Activated CD4-positive, alpha-beta T cell treated with anti-CD3 and anti-CD28 coated beads, Interleukin-2, amount 10 ng/mL, durations not matched to agents 7 days and 5 days (primary cell): ENCODE measurements at regions of chr7 and their contacts with region 1.

Region 1: DNA sequence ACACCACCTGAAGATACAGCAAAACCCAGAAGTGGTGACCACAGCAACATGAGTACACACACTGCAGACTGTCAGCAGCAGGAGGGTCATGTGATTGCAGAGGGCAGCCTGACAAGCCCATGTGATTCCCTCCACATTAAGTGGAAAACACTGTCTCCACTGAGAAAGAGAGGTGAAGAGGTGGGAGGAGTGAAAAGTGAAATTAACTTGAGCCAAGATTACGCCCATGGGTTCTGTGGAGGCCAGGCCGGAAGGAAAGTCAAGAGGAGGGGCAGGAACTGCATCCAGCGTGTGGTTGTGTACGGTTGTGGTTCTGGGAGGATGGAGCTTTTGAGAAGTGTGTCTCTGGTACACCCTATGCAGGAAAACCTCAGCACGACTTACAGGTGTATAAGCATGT is 138.5 kb downstream of the PLXNA4 start:
- DNase-seq: peak; percentile 85
- H3K4me3 Mint-ChIP-seq: peak overlapping the region; percentile 42
- H3K27ac Mint-ChIP-seq: peak overlapping the region; percentile 87
- H3K4me1 Mint-ChIP-seq: peaks cover 98% of the 10 kb centered on the region
- H3K27me3 Mint-ChIP-seq: peaks cover 3% of the 10 kb centered on the region

Region 2: GRCh38 chr7:132307465-132307864 is 130.3 kb before region 1 on chr7:
- CTCF ChIA-PET with region 1: no interaction called
- POLR2A ChIA-PET with region 1: no interaction called
- DNase-seq: no peak
- H3K4me3 Mint-ChIP-seq: no peak overlapping the region
- H3K27ac Mint-ChIP-seq: no peak overlapping the region
- H3K4me1 Mint-ChIP-seq: peaks cover 12% of the 10 kb centered on the region
- H3K27me3 Mint-ChIP-seq: peaks cover 33% of the 10 kb centered on the region

Region 3: GRCh38 chr7:132368246-132368900 is 69.4 kb before region 1 on chr7:
- CTCF ChIA-PET with region 1: no interaction called
- POLR2A ChIA-PET with region 1: no interaction called
- DNase-seq: no peak
- H3K4me3 Mint-ChIP-seq: no peak overlapping the region
- H3K27ac Mint-ChIP-seq: no peak overlapping the region
- H3K4me1 Mint-ChIP-seq: no peaks in the 10 kb centered on the region
- H3K27me3 Mint-ChIP-seq: peaks cover 14% of the 10 kb centered on the region

Region 4: GRCh38 chr7:132451161-132451560 is 13.4 kb after region 1 on chr7:
- CTCF ChIA-PET with region 1: interaction called, 28 read pairs
- POLR2A ChIA-PET with region 1: no interaction called
- DNase-seq: no peak
- H3K4me3 Mint-ChIP-seq: no peak overlapping the region
- H3K27ac Mint-ChIP-seq: peak overlapping the region; percentile 79
- H3K4me1 Mint-ChIP-seq: peaks cover 92% of the 10 kb centered on the region
- H3K27me3 Mint-ChIP-seq: peaks cover 3% of the 10 kb centered on the region

Region 5: DNA sequence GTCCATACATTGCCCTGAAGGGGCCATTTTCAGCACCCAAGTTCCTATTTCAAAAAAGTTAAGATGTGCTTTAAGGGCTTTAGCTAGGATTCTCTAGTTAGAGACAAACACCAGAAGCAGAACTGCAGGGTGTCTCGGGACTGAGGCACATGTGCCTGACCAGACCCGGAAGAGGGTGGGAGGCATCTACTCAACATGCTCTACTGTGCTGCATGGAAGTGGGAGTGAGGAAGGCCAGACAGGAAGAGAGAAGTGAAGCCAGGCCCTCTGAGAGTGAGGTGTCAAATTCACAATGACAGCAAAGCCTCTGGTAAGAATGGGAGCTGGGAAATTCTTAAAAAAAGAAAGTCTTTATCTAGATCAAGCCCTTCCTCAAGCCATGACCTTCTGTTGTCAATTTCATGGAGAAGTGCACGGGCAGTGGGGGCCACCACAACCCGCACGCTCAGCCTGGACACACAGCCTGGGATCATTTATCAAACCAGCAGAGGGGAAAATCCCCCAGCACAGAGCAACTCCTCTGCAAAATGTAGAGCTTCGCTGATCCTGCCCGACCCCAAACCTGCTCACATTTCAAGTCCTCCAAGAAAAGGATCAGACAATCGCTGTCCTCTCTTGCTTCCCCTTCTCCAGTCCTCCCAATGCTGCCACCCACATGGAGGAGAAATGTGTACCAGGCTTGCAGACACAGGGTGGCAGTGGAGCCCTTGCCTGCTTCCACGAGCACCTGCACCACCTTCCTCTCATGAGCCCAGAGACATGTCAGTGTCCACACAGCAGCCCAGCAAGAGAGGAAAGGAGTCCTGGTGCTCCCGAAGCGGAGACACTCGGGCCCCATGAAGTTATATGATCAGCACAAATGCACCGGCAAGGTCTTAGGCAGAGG is 100.0 kb after region 1 on chr7:
- CTCF ChIA-PET with region 1: no interaction called
- POLR2A ChIA-PET with region 1: no interaction called
- DNase-seq: no peak
- H3K4me3 Mint-ChIP-seq: no peak overlapping the region
- H3K27ac Mint-ChIP-seq: no peak overlapping the region
- H3K4me1 Mint-ChIP-seq: peaks cover 15% of the 10 kb centered on the region
- H3K27me3 Mint-ChIP-seq: peaks cover 16% of the 10 kb centered on the region

Region 6: GRCh38 chr7:132705146-132705545 is 267.4 kb after region 1 on chr7:
- CTCF ChIA-PET with region 1: no interaction called
- POLR2A ChIA-PET with region 1: no interaction called
- DNase-seq: no peak
- H3K4me3 Mint-ChIP-seq: no peak overlapping the region
- H3K27ac Mint-ChIP-seq: no peak overlapping the region
- H3K4me1 Mint-ChIP-seq: no peaks in the 10 kb centered on the region
- H3K27me3 Mint-ChIP-seq: no peaks in the 10 kb centered on the region